Naive thymus-derived CD4-positive, alpha-beta T cell (primary cell): ENCODE measurements at regions of chr7 and their contacts with region 1.

Region 1: DNA sequence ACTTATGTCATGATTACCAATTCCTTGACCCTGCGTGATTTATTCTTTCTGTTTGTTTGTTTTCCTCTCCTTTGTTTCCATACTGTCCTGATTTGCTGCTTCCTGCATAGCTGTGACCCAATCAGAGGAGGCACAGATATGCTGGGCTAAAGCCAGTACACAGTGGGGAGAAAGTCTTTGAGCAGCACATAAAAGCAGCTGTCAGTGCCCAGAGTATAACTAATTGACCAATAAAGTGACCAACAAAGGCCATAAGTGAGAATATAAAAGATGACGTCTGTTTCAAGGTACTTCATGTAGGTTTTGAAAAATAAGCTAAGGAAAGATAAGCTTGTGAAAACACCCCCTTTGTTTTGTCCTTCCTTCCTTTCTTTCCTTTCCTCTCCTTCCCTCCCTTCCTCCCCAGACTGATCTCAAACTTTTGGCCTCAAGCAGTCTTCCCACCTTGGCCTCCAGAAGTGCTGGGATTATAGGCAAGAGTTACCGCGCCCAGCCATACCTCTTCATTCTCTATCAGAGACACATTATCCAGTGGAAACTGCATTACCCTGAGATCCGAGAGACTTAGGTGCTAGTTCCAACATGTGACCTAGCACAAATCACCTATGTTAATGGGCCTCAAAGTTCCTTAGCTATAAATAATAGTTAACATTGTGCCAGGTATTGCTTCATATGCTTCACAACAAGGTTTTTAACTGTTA is 17.0 kb downstream of the BCAP29 start:
- DNase-seq: no peak
- ATAC-seq: no peak
- H3K4me3 ChIP-seq: no peak overlapping the region
- H3K4me3 Mint-ChIP-seq: no peak overlapping the region
- H3K27ac ChIP-seq: no peak overlapping the region
- H3K27ac Mint-ChIP-seq: no peak overlapping the region
- H3K4me1 ChIP-seq: no peaks in the 10 kb centered on the region
- H3K4me1 Mint-ChIP-seq: peaks cover 0 to 3% (median 0%) of the 10 kb centered on the region in 7 donors
- H3K27me3 ChIP-seq: no peaks in the 10 kb centered on the region
- H3K27me3 Mint-ChIP-seq: no peaks in the 10 kb centered on the region

Region 2: GRCh38 chr7:107291438-107291837 is 305.6 kb before region 1 on chr7:
- CTCF ChIA-PET with region 1: no interaction called
- POLR2A ChIA-PET with region 1: no interaction called
- intact Hi-C with region 1: no loop called
- DNase-seq: no peak
- ATAC-seq: no peak
- H3K4me3 ChIP-seq: no peak overlapping the region
- H3K4me3 Mint-ChIP-seq: no peak overlapping the region
- H3K27ac ChIP-seq: no peak overlapping the region
- H3K27ac Mint-ChIP-seq: no peak overlapping the region
- H3K4me1 ChIP-seq: no peaks in the 10 kb centered on the region
- H3K4me1 Mint-ChIP-seq: no peaks in the 10 kb centered on the region
- H3K27me3 ChIP-seq: no peaks in the 10 kb centered on the region
- H3K27me3 Mint-ChIP-seq: no peaks in the 10 kb centered on the region

Region 3: GRCh38 chr7:107579885-107580715 is 16.9 kb before region 1 on chr7 and contains the start of gene BCAP29:
- CTCF ChIA-PET with region 1: no interaction called
- POLR2A ChIA-PET with region 1: interaction called, 3 read pairs
- intact Hi-C with region 1: loop called in 1 of 2 experiments (anchors 2 kb)
- DNase-seq: peak; percentile 50 to 83 (median 65)
- ATAC-seq: peak; percentile 98
- H3K4me3 ChIP-seq: peak within 1 kb of the TSS; percentile 97
- H3K4me3 Mint-ChIP-seq: peak within 1 kb of the TSS; percentile 83 to 94 (median 90)
- H3K27ac ChIP-seq: peak within 1 kb of the TSS; percentile 72
- H3K27ac Mint-ChIP-seq: peak within 1 kb of the TSS; percentile 43 to 93 (median 87)
- H3K4me1 ChIP-seq: peaks cover 4 to 8% of the 10 kb centered on the region in 2 donors
- H3K4me1 Mint-ChIP-seq: peaks cover 6 to 34% (median 25%) of the 10 kb centered on the region in 7 donors
- H3K27me3 ChIP-seq: no peaks in the 10 kb centered on the region
- H3K27me3 Mint-ChIP-seq: no peaks in the 10 kb centered on the region
- total RNA-seq, gene BCAP29: 10.5 to 38.7 (median 14.4) TPM